ENCODE measurements at regions of chr12 and their contacts with region 1.

Region 1: DNA sequence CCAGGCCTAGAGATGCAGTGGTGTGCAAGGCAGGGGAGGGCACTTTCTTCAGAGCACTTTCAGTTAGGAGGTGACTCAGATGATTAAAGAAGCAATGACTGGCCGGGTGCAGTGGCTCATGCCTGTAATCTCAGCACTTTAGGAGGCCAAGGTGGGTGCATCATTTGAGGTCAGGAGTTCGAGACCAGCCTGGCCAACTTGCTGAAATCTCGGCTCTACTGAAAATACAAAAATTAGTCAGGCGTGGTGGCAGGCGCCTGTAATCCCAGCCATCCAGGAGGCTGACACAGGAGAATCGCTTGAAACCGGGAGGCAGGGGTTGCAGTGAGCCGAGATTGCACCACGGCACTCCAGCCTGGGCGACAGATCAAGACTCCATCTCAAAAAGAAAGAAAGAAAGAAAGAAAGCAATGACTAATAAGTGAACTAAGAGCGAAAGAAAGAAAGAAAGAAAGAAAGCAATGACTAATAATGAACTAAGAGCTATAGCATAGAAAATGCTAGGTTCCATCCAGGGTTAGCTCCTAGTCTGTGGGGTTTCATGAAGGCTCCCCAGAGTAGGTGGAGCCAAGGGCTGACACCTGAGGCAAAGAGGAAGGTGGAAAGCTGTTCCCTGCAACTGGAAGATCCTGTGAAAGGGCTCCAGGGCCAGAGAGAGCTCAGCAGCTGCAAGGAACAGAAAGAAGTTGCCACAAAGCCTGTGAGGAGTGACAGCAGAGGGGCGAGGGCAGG is 334.5 kb downstream of the CACNA1C start:
- DNase-seq: no peak
- ATAC-seq: no peak
- H3K4me3 ChIP-seq: no peak overlapping the region
- H3K27ac ChIP-seq: no peak overlapping the region
- H3K4me1 ChIP-seq: peaks cover 2 to 3% of the 10 kb centered on the region in 2 donors
- H3K27me3 ChIP-seq: no peaks in the 10 kb centered on the region

Region 2: DNA sequence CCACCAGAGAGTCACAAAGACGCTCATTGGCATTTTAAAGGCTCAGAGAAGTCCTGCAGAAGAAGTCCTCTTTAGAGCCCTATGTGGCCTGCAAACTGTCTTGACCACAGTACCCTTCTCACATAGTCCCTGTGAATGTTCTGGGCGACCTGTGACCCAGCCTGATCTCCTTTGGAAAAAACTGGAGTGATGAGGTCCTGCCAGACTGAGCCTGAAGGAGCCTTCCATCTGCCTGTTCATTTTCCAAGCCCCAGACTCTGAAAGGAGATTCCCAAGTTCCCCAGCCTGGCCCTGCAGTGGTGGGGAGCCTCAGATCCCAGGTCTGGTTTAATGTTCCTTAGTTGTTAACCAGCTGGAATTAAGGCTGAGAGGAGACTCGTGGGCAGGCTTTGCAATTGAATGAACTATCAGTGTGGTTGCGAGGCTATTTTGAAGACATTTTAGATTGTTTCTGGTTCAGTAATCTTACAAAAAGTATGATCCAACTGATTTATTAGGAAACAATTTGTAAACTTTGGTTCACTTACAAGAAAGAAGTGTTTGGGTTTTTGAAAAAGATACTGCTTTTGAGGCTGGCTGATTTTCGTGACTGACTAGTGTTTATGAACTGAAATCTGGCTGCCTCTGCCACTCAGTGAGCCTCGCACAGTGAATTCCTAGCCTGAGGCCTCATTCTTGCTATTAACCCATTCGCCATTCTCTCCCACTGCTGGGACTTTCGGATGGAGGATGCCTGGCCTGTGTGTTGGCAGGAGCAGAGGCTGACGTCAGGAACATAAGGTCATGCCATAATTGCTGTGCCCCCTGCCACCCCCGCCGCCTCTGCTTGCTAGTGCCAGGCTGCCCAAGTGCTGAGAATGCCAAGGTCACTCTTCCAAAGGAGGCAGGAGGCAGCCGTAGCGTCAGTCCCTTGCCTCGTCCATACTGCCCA is 85.5 kb before region 1 on chr12:
- intact Hi-C with region 1: loop called in 1 of 2 experiments (anchors 5 kb)
- DNase-seq: peak; percentile 70 to 91
- ATAC-seq: peak; percentile 83
- H3K4me3 ChIP-seq: no peak overlapping the region
- H3K27ac ChIP-seq: peak overlapping the region; percentile 91 to 97
- H3K4me1 ChIP-seq: peaks cover 0 to 7% of the 10 kb centered on the region in 2 donors
- H3K27me3 ChIP-seq: no peaks in the 10 kb centered on the region

Region 3: GRCh38 chr12:2341871-2342270 is 45.4 kb before region 1 on chr12:
- intact Hi-C with region 1: loop called (anchors 5 kb)
- DNase-seq: no peak
- ATAC-seq: no peak
- H3K4me3 ChIP-seq: no peak overlapping the region
- H3K27ac ChIP-seq: no peak overlapping the region
- H3K4me1 ChIP-seq: peaks cover 8 to 11% of the 10 kb centered on the region in 2 donors
- H3K27me3 ChIP-seq: no peaks in the 10 kb centered on the region

Region 4: DNA sequence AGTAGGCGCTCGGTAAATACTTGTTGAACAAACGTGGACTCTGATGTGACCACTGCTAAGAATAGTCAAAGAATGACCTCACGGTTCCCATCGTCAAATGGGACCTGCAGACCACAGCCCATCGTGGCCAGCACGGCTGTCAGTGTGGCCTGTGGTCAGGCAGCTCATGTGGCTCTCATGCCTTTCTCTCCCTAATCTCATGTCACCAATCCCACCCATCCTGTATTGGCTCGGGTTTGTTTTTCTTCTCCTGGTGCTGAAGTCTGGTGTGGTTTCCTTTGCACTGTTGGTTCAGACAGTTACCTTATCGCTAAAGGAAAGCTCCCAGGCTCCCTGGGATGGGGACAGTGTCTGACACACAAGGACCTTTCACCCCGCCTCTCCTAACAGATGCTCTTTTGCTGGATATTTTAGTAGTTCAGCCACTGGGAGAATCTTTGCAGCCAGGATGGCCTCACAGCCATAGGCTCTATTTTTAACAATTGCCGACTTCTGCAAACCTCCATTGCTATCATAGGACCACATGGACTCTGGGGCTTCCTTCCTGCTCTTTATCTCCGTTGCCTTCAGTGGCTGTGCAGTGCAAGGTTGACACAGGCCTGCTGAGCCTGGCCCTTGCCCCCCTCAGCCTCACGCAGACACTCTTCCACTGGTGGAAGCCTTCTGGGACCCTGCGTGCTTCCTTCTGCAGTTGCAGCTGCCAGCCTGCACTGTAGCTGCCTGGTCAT is 114.4 kb after region 1 on chr12:
- intact Hi-C with region 1: no loop called
- DNase-seq: no peak
- ATAC-seq: peak; percentile 31
- H3K4me3 ChIP-seq: no peak overlapping the region
- H3K27ac ChIP-seq: no peak overlapping the region
- H3K4me1 ChIP-seq: no peaks in the 10 kb centered on the region
- H3K27me3 ChIP-seq: no peaks in the 10 kb centered on the region